ENCODE measurements at regions of chr9 and their contacts with region 1.

Region 1: GRCh38 chr9:136482793-136483588 is at the start of gene SEC16A:
- DNase-seq: peak; percentile 97 to 100 (median 99)
- ATAC-seq: peak; percentile 85
- H3K4me3 ChIP-seq: peak within 1 kb of the TSS; percentile 93
- H3K4me3 Mint-ChIP-seq: peak within 1 kb of the TSS; percentile 86 to 99 (median 97)
- H3K27ac ChIP-seq: peak within 1 kb of the TSS; percentile 97
- H3K27ac Mint-ChIP-seq: peak within 1 kb of the TSS; percentile 86 to 99 (median 98)
- H3K4me1 ChIP-seq: peaks cover 17 to 30% of the 10 kb centered on the region in 2 donors
- H3K4me1 Mint-ChIP-seq: peaks cover 20 to 47% (median 39%) of the 10 kb centered on the region in 7 donors
- H3K27me3 ChIP-seq: no peaks in the 10 kb centered on the region
- H3K27me3 Mint-ChIP-seq: no peaks in the 10 kb centered on the region
- total RNA-seq, gene SEC16A: 79.8 to 88.5 (median 86.1) TPM

Region 2: GRCh38 chr9:135907431-135908092 is 575.4 kb before region 1 on chr9 and contains the start of gene CAMSAP1:
- CTCF ChIA-PET with region 1: no interaction called
- POLR2A ChIA-PET with region 1: no interaction called
- intact Hi-C with region 1: loop called in 1 of 2 experiments (anchors 2 kb)
- DNase-seq: peak; percentile 89 to 97 (median 93)
- ATAC-seq: peak; percentile 91
- H3K4me3 ChIP-seq: peak within 1 kb of the TSS; percentile 69
- H3K4me3 Mint-ChIP-seq: peak within 1 kb of the TSS; percentile 85 to 94 (median 90)
- H3K27ac ChIP-seq: peak within 1 kb of the TSS; percentile 89
- H3K27ac Mint-ChIP-seq: peak within 1 kb of the TSS; percentile 68 to 92 (median 83)
- H3K4me1 ChIP-seq: peaks cover 21% of the 10 kb centered on the region in 2 donors
- H3K4me1 Mint-ChIP-seq: peaks cover 33 to 74% (median 63%) of the 10 kb centered on the region in 7 donors
- H3K27me3 ChIP-seq: no peaks in the 10 kb centered on the region
- H3K27me3 Mint-ChIP-seq: no peaks in the 10 kb centered on the region
- total RNA-seq, gene CAMSAP1: 16.4 to 34.3 (median 23.6) TPM

Region 3: DNA sequence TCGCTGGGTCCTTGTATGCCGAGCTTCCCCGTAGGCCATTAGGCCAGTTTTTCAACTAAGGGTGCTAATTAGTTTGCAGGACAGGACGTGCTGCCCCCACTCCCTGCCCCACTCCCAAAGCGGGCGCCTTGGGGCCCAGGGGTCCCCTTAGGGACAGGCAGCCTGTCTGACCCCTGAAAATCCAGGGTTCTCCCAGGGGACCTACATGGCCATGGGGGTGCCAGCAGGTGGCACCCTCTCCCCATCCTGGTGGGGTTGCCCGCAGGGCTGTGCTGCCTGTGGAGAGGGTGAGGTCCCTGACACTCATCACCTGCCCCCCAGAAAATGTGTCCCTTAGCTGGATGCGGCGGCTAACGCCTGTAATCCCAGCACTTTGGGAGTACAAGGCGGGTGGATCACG is 170.6 kb before region 1 on chr9:
- CTCF ChIA-PET with region 1: no interaction called
- POLR2A ChIA-PET with region 1: no interaction called
- intact Hi-C with region 1: loop called in 1 of 2 experiments (anchors 1 kb)
- DNase-seq: peak in 7 of 9 donors; percentile 29 to 54 (median 37)
- ATAC-seq: peak; percentile 51
- H3K4me3 ChIP-seq: no peak overlapping the region
- H3K4me3 Mint-ChIP-seq: no peak overlapping the region
- H3K27ac ChIP-seq: no peak overlapping the region
- H3K27ac Mint-ChIP-seq: no peak overlapping the region
- H3K4me1 ChIP-seq: peaks cover 0 to 8% of the 10 kb centered on the region in 2 donors
- H3K4me1 Mint-ChIP-seq: no peaks in the 10 kb centered on the region
- H3K27me3 ChIP-seq: no peaks in the 10 kb centered on the region
- H3K27me3 Mint-ChIP-seq: no peaks in the 10 kb centered on the region

Region 4: DNA sequence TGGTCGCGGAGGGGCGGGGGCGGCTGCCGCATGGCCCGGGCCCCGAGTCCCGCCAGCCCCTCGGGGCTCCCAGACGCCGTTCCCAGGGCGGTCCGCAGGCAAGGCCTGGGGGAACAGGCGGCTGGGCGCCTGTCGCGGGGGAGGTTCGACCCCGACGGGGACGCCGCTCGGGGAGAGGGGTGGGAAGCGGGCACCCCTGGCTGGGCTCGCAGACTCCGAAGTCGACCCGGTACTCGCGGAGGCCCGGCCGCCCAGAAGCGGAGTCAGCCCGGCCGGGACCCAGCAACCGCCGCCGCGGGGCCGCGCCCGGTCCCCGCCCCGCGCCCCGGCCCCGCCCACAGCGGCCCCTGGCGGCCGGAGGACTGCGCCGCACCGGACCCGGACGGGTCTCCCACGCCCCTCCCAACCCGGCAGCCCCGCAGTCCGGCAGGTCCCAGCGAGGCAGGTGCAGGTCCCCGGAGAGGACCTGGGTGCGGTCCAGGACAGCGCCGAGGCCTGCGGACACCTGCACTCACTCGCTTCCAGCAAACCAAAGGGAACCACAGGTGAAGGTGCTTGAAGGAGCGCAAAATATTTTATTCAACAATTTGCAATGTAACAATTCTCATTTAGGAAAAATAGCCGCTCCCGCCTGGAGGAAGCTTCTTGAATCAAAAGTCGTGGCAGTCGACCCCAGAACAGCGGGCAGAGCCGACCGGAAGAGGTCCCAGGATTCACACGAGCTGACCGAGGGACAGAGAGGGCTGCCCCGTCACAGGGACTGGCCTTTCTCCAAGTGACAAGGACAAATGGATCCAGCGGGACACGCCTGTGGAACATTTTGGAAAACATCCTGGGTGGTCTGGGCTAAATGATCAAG is 43.2 kb before region 1 on chr9 and contains the start of gene INPP5E:
- CTCF ChIA-PET with region 1: no interaction called
- POLR2A ChIA-PET with region 1: no interaction called
- intact Hi-C with region 1: loop called (anchors 1 kb)
- DNase-seq: peak; percentile 68 to 99 (median 84)
- ATAC-seq: peak; percentile 93
- H3K4me3 ChIP-seq: peak within 1 kb of the TSS; percentile 64
- H3K4me3 Mint-ChIP-seq: peak within 1 kb of the TSS; percentile 79 to 90 (median 85)
- H3K27ac ChIP-seq: peak within 1 kb of the TSS; percentile 84
- H3K27ac Mint-ChIP-seq: peak within 1 kb of the TSS in 8 of 9 donors; percentile 30 to 85 (median 70)
- H3K4me1 ChIP-seq: peaks cover 21% of the 10 kb centered on the region in 2 donors
- H3K4me1 Mint-ChIP-seq: peaks cover 20 to 29% (median 26%) of the 10 kb centered on the region in 7 donors
- H3K27me3 ChIP-seq: no peaks in the 10 kb centered on the region
- H3K27me3 Mint-ChIP-seq: no peaks in the 10 kb centered on the region
- total RNA-seq, gene INPP5E: 15.7 to 23.8 (median 22.6) TPM

Region 5: DNA sequence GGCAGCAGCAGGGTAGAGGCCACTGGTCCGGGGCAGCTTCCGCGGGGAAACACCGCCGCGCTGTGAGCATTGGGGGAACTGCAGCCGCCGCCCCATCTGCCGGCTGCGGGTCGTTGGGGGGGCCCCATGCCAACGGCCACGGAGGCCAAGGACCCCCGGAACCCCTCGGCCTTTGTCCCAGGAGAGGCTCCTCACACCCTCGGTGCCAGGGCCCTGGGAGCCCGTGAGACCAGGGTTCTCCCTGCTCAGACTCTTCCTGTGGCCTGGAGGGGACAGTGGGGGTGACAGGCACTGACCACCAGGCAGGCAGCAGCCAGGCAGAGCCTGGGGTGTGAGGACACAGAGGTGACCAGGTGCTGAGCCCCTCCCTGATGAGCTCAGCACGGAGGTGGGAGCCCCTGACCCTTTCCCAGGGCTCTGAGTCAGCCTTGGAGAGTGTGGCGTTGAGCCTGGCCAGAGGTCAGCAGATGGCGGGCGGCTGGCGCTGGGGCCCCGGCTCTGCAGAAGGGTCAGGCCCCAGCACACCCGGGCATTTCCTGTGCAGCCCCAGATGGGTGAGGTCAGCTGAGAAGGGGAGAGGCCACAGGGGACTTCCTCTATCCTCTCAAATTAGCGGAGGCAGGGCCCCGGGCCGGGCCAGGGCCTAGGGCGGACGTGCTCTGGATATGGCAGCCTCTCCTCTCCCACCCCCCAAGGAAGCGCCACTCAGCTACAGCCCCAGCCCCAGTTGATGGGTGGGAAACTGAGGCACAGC is 161.8 kb after region 1 on chr9:
- CTCF ChIA-PET with region 1: interaction called, 3 read pairs
- POLR2A ChIA-PET with region 1: no interaction called
- intact Hi-C with region 1: loop called (anchors 1 kb)
- DNase-seq: peak in 7 of 9 donors; percentile 59 to 78 (median 67)
- ATAC-seq: peak; percentile 92
- H3K4me3 ChIP-seq: no peak overlapping the region
- H3K4me3 Mint-ChIP-seq: no peak overlapping the region
- H3K27ac ChIP-seq: no peak overlapping the region
- H3K27ac Mint-ChIP-seq: no peak overlapping the region
- H3K4me1 ChIP-seq: peaks cover 10% of the 10 kb centered on the region in 2 donors
- H3K4me1 Mint-ChIP-seq: peaks cover 0 to 3% (median 0%) of the 10 kb centered on the region in 7 donors
- H3K27me3 ChIP-seq: peaks cover 0 to 13% of the 10 kb centered on the region in 2 donors
- H3K27me3 Mint-ChIP-seq: peaks cover 12 to 30% (median 28%) of the 10 kb centered on the region in 5 donors

Region 6: DNA sequence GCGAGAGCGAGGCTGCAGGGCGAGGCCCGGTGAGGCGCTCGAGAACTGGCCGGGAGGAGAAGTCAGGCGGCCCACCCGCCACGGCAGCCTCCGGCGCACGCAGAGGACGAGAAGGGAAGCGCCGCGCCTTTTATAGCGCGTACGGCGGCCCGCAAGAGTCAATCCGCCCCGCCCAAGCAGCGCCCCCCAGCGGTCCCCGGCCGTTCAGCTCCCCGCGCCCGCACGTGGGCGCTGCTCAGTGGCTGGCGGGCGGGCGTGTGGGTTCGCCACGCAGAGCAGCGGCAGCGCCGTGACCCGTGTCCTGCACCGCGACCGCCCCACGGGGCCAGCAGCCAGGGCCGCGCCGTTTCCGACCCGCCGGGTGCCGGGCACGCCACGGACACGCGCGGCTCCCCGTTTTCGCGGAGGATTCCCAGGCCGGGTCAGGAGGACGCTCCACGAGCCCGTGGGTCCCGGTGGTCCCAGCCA is 245.1 kb after region 1 on chr9:
- CTCF ChIA-PET with region 1: interaction called, 3 read pairs
- POLR2A ChIA-PET with region 1: interaction called, 8 read pairs
- intact Hi-C with region 1: loop called (anchors 1 to 5 kb)
- DNase-seq: peak; percentile 87 to 97 (median 92)
- ATAC-seq: peak; percentile 96
- H3K4me3 ChIP-seq: peak overlapping the region; percentile 87
- H3K4me3 Mint-ChIP-seq: peak overlapping the region in 9 of 10 donors; percentile 47 to 99 (median 95)
- H3K27ac ChIP-seq: peak overlapping the region; percentile 83
- H3K27ac Mint-ChIP-seq: peak overlapping the region in 7 of 9 donors; percentile 47 to 93 (median 92)
- H3K4me1 ChIP-seq: peaks cover 16 to 17% of the 10 kb centered on the region in 2 donors
- H3K4me1 Mint-ChIP-seq: peaks cover 12 to 37% (median 28%) of the 10 kb centered on the region in 7 donors
- H3K27me3 ChIP-seq: no peaks in the 10 kb centered on the region
- H3K27me3 Mint-ChIP-seq: peaks cover 0 to 5% (median 0%) of the 10 kb centered on the region in 5 donors

Region 7: GRCh38 chr9:136849038-136849959 is 366.3 kb after region 1 on chr9 and contains the start of gene PHPT1:
- CTCF ChIA-PET with region 1: no interaction called
- POLR2A ChIA-PET with region 1: no interaction called
- intact Hi-C with region 1: loop called in 1 of 2 experiments (anchors 2 kb)
- DNase-seq: peak; percentile 91 to 98 (median 97)
- ATAC-seq: peak; percentile 96
- H3K4me3 ChIP-seq: peak within 1 kb of the TSS; percentile 99
- H3K4me3 Mint-ChIP-seq: peak within 1 kb of the TSS; percentile 86 to 97 (median 92)
- H3K27ac ChIP-seq: peak within 1 kb of the TSS; percentile 71
- H3K27ac Mint-ChIP-seq: peak within 1 kb of the TSS; percentile 40 to 94 (median 88)
- H3K4me1 ChIP-seq: peaks cover 15 to 17% of the 10 kb centered on the region in 2 donors
- H3K4me1 Mint-ChIP-seq: peaks cover 0 to 16% (median 10%) of the 10 kb centered on the region in 7 donors
- H3K27me3 ChIP-seq: no peaks in the 10 kb centered on the region
- H3K27me3 Mint-ChIP-seq: peaks cover 0 to 21% (median 0%) of the 10 kb centered on the region in 5 donors
- total RNA-seq, gene PHPT1: 17.7 to 167 (median 27.7) TPM

Measured in naive thymus-derived CD4-positive, alpha-beta T cell (primary cell).